Endothelial cell of umbilical vein (primary cell): ENCODE measurements at regions of chr2 and their contacts with region 1.

Region 1: DNA sequence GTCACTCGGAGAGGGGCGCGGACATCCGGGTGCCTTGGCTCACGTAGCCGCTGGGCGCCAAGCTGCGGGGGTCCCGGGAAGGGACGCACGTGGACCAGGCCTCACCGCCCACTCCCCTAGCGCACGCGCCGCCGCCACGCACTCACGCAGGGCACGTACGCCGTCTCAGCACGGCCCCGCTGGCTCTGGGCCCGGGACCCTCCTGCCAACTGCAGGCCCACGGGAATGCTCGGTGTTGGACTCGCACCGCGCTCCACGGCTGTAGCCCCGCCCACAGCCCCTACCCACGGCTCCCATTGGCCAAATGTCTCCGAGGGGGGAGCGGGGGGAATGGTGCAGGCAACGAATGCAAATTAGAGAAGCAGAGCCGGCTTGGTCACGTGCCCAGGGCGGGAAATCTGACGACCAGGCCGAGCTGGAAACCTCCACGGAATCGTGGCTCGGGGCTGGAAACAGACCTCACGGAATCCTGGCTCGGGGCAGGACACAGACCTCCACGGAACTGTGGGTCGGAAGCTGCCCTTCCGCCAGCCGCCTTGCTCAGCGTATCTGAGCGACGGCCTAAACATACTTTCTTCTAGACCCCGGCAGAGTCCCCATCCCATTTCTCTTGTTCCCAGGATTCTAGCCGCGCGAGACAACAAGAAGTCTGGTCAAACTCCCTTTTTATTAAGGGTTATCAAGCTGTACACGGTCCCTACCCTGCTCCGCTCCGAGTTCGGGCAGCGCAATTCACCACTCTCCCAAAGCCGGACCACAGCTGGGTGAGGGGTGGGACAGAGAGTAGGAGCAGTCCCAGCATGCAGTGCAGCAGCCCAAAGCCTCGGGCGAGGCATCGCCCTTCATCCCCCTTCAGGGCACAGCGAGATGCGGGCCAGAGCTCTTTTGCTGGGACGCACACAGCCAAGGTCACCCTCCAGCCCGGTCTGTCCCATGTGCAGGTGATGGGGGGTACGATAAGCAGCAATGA is at the start of gene ABCB6:
- DNase-seq: peak; percentile 93
- H3K4me3 ChIP-seq: peak within 1 kb of the TSS; percentile 20 to 55 (median 46)
- H3K27ac ChIP-seq: peak within 1 kb of the TSS; percentile 82
- H3K4me1 ChIP-seq: peaks cover 14% of the 10 kb centered on the region
- H3K27me3 ChIP-seq: no peaks in the 10 kb centered on the region
- CTCF ChIP-seq: no peak
- POLR2A ChIP-seq: peak; percentile 83
- total RNA-seq, gene ABCB6: 26.6 and 32.5 TPM in 2 replicates

Region 2: DNA sequence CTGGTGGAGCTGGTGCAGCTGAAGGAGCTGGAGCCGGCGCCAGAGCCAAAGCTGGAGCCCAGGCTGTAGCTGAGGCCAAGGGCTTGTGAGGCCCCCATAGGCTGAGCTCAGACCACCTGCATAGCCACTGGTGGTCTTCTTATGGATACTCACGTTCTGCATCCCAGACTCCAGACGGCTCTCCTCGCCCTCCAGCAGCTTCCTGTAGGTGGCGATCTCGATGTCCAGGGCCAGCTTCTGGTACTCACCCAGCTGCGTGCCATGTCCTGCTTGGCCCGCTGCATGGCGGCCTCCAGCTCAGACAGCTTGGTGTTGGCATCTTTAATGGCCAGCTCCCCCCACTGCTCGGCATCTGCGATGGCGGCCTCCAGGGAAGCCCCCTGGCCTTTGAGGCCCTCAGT is 265.5 kb before region 1 on chr2:
- CTCF ChIA-PET with region 1: no interaction called
- POLR2A ChIA-PET with region 1: no interaction called
- dilution Hi-C with region 1: no loop called
- intact Hi-C with region 1: no loop called
- DNase-seq: no peak
- H3K4me3 ChIP-seq: no peak overlapping the region
- H3K27ac ChIP-seq: no peak overlapping the region
- H3K4me1 ChIP-seq: no peaks in the 10 kb centered on the region
- H3K27me3 ChIP-seq: peaks cover 23 to 27% of the 10 kb centered on the region in 2 experiments
- CTCF ChIP-seq: peak in 1 of 2 donors; percentile 13
- POLR2A ChIP-seq: no peak

Region 3: DNA sequence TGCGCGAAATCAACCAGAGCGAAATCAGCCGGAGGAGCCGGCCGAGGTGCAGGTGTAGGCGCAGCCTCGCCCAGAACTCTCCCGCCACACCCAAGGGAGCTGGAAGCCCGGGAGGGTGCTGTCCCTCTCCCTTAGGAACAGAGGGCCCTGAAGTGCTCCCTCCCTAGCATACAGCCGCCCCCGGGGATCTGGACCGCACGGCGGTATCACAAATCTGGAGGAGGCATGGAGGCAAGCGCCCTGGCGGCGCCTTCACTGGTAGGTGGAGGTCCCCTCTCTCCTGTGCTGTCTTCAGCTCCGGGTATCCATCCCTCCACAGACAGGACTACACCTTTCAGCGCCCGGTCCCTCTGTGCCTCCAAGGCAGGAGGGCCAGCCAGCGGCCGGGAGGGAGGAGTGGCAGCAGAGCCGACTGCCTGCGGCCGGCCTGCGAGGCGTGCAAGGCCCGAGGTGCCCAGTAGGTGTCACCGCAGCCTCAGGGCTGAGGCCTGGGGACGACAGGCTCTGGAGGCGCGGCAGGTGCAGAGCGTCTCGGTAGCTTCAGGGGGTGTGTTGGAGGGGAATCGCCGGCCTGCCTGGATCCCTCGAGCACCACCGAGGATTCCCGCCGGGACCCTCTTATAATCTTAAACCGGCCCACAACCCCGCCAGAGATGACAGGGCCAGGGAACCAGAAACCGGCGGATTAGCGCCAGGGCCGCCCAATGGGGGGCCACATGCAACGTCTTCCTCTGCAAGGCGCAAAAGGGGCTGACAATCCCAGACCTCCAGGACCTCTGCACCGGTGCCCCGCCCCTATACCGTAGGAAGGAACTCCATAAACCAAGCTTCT is 161.1 kb before region 1 on chr2:
- CTCF ChIA-PET with region 1: no interaction called
- POLR2A ChIA-PET with region 1: no interaction called
- dilution Hi-C with region 1: no loop called
- intact Hi-C with region 1: loop called (anchors 5 kb)
- DNase-seq: peak; percentile 60
- H3K4me3 ChIP-seq: no peak overlapping the region
- H3K27ac ChIP-seq: no peak overlapping the region
- H3K4me1 ChIP-seq: no peaks in the 10 kb centered on the region
- H3K27me3 ChIP-seq: peaks cover 52 to 66% of the 10 kb centered on the region in 2 experiments
- CTCF ChIP-seq: peak; percentile 85 to 94
- POLR2A ChIP-seq: no peak

Region 4: DNA sequence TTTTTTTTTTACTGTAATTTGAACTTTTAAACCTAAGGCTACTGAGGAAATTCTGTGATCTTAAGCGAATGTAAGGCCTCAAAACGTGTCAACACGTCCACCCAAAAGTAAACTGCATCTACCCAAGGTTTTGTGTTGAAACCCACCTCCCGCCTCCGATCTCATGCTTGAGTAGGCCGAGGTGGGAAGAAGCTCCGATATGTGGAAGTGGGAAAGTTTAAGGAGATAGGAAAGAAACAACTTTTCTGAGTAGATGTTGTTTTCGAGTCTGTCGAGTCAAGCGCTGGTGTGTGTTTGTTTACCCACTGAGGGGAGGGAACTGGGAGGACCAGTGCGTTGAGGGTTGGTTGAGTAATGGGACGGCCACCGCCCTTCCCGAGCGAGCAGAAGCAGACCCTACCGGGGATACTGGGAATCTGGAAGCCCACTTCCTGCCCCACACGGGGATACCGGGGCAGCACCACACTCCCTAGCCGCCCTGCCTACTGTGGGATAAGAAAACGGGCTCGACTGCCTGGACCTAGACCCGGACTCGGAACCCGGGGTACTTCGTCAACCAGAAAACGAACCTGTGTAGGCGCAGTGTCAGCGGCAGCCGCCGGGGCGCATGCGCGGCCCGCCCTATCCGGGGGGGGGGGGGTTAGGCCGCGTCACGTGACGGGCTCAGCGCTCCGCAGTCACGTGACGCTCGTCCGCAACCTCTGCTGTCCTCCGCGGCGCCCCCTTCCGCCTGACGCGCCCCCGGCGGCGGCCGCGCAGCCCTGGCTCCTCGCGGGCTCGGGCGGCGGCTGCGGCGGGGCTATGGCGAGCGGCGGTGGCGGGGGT is 41.3 kb before region 1 on chr2 and contains the start of gene RETREG2:
- CTCF ChIA-PET with region 1: interaction called, 5 read pairs
- POLR2A ChIA-PET with region 1: no interaction called
- dilution Hi-C with region 1: no loop called
- intact Hi-C with region 1: loop called (anchors 1 kb)
- DNase-seq: peak; percentile 93
- H3K4me3 ChIP-seq: peak within 1 kb of the TSS; percentile 44 to 81 (median 67)
- H3K27ac ChIP-seq: peak within 1 kb of the TSS; percentile 62
- H3K4me1 ChIP-seq: peaks cover 18% of the 10 kb centered on the region
- H3K27me3 ChIP-seq: no peaks in the 10 kb centered on the region
- CTCF ChIP-seq: peak in 1 of 2 donors; percentile 25
- POLR2A ChIP-seq: peak; percentile 97
- total RNA-seq, gene RETREG2: 58.2 and 59.5 TPM in 2 replicates

Region 5: GRCh38 chr2:219229305-219230058 is 10.5 kb after region 1 on chr2 and contains the starts of genes ANKZF1 and ATG9A:
- CTCF ChIA-PET with region 1: interaction called, 9 read pairs
- POLR2A ChIA-PET with region 1: interaction called, 6 read pairs
- dilution Hi-C with region 1: no loop called
- intact Hi-C with region 1: loop called (anchors 1 kb)
- DNase-seq: peak; percentile 100
- H3K4me3 ChIP-seq: peak within 1 kb of the TSS; percentile 70 to 76 (median 70)
- H3K27ac ChIP-seq: peak within 1 kb of the TSS; percentile 76
- H3K4me1 ChIP-seq: peaks cover 15% of the 10 kb centered on the region
- H3K27me3 ChIP-seq: no peaks in the 10 kb centered on the region
- CTCF ChIP-seq: no peak
- POLR2A ChIP-seq: peak; percentile 85
- total RNA-seq, gene ANKZF1: 34.0 and 36.2 TPM in 2 replicates
- total RNA-seq, gene ATG9A: 62.2 and 65.5 TPM in 2 replicates

Region 6: DNA sequence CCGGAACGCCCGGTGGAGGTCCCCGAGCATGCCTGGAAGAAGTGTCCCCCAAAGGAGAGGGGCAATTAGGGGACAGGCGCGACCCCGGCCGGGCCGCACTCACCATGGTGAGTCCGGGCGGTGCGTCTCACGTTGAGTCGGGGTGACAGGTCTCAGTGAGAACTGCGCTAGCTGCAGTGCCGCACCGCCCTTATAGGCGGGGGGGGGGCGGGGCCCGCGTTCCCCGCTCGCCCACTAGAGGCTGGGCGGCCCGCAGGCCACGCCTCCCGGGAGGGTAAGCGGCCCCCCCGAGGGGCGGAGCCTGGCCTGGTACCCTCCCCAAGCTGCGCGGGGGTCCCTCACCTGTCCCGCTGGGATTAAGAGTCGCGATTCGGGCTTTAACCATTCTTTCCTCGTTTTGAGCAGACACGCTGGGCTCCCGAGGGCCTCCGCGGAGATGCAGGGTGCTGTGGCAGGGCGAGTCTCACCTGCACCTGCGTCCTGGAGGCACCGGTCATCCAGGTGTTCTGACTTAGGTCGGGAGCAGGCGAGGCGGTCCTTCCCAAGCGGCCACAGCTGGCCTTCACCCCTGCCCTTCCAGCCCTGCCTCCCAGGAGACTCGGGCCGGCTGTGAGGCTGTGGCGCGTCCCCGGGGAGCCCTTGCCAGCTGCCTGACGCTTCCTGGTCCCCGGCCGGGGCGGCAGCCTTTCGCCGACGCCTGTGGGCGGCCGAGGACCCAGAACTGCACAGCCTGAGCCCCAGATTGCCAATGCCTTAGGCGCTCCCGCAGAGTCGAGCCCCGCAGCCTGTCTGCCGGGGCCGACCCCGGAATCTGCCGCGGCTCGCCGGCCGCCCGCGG is 35.0 kb after region 1 on chr2 and contains the start of gene TUBA4A:
- CTCF ChIA-PET with region 1: no interaction called
- POLR2A ChIA-PET with region 1: interaction called, 3 read pairs
- dilution Hi-C with region 1: no loop called
- intact Hi-C with region 1: loop called (anchors 2 kb)
- DNase-seq: peak; percentile 67
- H3K4me3 ChIP-seq: peak within 1 kb of the TSS; percentile 32 to 53 (median 34)
- H3K27ac ChIP-seq: no peak within 1 kb of the TSS
- H3K4me1 ChIP-seq: peaks cover 36% of the 10 kb centered on the region
- H3K27me3 ChIP-seq: peaks cover 15 to 16% of the 10 kb centered on the region in 2 experiments
- CTCF ChIP-seq: no peak
- POLR2A ChIP-seq: no peak
- total RNA-seq, gene TUBA4A: 10.7 and 16.5 TPM in 2 replicates

Region 7: DNA sequence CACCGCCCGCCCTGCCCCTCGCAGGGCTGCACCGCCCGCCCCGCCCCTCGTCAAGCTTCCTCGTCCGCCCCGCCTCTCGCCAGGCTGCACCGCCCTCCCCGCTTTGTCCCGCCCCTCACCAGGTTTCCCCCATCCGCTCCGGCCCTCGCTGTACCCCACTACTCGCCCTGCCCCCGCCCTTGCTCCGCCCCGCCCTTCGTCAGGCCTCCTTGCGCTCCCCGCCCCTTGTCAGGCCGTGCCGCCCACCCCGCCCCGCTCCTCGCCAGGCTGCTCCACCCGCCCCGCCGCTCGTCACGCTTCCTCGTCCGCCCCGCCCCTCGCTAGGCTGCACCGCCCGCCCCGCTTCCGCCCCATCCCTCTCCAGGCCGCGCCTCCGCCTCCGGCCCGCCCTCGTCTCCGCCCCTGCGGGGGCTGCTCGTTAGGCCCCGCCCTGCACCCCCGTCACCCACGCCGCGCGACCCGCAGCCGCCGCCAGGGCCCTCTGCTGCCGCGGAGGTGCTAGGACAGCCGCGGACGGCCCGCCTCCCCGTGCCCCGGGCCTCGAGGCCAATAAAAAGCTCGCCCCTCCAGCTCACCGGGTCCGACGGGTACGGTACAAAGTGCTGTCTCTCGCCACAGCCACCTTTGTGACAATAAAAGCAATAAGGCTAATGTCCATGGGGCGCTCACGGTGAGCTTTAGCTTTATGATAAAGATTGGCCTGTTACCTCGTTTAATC is 169.3 kb after region 1 on chr2:
- CTCF ChIA-PET with region 1: no interaction called
- POLR2A ChIA-PET with region 1: no interaction called
- dilution Hi-C with region 1: no loop called
- intact Hi-C with region 1: loop called (anchors 2 kb)
- DNase-seq: peak; percentile 96
- H3K4me3 ChIP-seq: peak overlapping the region in 2 of 3 experiments; percentile 46 to 55
- H3K27ac ChIP-seq: no peak overlapping the region
- H3K4me1 ChIP-seq: peaks cover 9% of the 10 kb centered on the region
- H3K27me3 ChIP-seq: peaks cover 2% of the 10 kb centered on the region in 2 experiments
- CTCF ChIP-seq: peak; percentile 47 to 56
- POLR2A ChIP-seq: no peak

Region 8: DNA sequence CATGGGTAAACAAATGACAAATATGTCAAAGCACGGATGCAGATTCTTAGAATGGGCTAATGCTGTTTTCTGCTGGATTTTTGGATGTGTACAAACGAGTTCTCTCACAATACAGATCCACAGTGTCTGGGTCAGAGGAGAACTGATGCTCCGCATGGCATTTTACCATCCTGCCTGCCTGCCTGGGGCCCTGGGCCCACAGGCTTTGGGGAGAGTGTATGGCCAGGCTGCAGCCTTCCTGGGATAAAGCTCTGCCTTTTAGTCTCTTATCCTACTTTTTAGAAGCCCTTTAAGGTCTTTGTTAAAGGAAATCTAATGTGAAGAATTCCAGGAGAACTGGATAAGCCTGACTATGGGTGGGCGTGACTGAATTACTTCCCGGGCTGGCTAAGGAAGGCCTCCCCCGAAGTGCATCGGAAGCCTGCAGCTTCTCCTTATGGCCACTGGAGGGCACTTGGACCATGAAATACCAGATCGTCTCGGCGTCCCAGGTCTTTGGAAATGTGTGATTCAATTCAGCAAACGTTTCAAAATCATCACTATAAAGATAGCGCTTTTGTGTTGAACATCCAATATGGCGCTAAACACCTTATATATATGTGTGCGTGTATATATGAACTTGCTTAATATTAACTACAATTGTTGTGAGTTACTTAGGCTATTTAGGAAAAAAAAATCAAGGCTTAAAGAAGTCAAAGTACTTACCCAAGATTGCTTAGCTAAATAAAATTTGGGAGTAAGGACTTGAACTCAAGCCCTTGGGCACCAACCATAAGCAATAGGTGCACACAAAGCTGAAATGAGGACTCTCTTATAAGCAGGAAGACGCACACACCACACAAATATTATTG is 183.9 kb after region 1 on chr2:
- CTCF ChIA-PET with region 1: no interaction called
- POLR2A ChIA-PET with region 1: no interaction called
- dilution Hi-C with region 1: no loop called
- intact Hi-C with region 1: no loop called
- DNase-seq: peak; percentile 64
- H3K4me3 ChIP-seq: no peak overlapping the region
- H3K27ac ChIP-seq: no peak overlapping the region
- H3K4me1 ChIP-seq: peaks cover 2% of the 10 kb centered on the region
- H3K27me3 ChIP-seq: peaks cover 0 to 1% of the 10 kb centered on the region in 2 experiments
- CTCF ChIP-seq: peak; percentile 90 to 91
- POLR2A ChIP-seq: no peak

Region 9: GRCh38 chr2:219552382-219553167 is 333.6 kb after region 1 on chr2:
- CTCF ChIA-PET with region 1: no interaction called
- POLR2A ChIA-PET with region 1: no interaction called
- dilution Hi-C with region 1: no loop called
- intact Hi-C with region 1: no loop called
- DNase-seq: peak; percentile 78
- H3K4me3 ChIP-seq: peak overlapping the region in 2 of 3 experiments; percentile 13 to 40
- H3K27ac ChIP-seq: no peak overlapping the region
- H3K4me1 ChIP-seq: no peaks in the 10 kb centered on the region
- H3K27me3 ChIP-seq: peaks cover 19 to 20% of the 10 kb centered on the region in 2 experiments
- CTCF ChIP-seq: no peak
- POLR2A ChIP-seq: no peak